Motor neuron (in vitro differentiated cells): ENCODE measurements at regions of chr19 and their contacts with region 1.

Region 1: GRCh38 chr19:44723952-44724319 is 24.6 kb upstream of the BCL3 start:
- ATAC-seq: peak; percentile 84 to 99 (median 95)
- H3K4me3 ChIP-seq: no peak overlapping the region
- H3K27ac ChIP-seq: no peak overlapping the region
- H3K4me1 ChIP-seq: peaks cover 0 to 1% of the 10 kb centered on the region in 2 donors

Region 2: DNA sequence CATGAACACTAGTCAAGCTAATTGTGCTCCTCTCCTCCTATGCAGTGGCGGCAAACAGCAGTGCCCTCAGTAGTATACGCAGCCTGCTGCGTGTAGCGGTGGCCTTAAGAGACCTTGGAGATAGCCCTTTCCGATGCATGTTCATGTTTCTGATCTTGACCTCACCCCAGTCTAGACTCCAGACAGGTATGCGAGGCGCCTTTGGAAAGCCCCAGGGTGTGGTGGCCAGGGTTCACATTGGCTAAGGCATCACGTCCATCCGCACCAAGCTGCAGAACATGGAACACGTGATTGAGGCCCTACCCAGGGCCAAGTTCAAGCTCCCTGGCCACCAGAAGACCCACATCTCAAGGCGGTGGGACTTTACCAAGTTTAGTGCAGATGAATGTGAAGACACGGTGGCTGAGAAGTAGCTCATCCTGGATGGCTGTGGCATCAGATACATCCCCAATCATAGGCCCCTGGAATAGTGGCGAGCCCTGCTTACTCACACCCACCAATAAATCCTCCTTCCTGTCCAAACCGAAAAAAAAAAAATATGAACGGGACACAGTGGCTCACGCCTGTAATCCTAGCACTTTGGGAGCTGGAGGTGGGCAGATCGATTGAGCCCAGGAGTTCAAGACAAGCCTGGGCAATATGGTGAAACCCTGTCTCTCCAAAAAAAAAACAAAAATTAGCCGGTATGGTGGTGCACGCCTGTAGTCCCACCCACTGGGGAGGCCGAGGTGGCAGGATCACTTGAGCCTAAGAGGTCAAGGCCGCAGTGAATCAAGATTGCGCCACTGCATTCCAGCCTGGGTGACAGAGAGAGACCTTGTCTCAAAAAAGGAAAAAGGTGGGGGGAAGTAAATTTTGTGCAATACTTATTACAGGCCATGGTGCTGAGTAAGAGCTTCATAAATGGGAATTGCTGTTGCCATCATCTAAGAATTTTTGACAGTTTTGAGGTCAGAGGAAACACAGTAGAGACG is 41.3 kb after region 1 on chr19:
- in situ Hi-C with region 1: loop called in 1 of 9 experiments (anchors 5 kb)
- ATAC-seq: peak in 5 of 8 experiments; percentile 1 to 27 (median 2)
- H3K4me3 ChIP-seq: no peak overlapping the region
- H3K27ac ChIP-seq: no peak overlapping the region
- H3K4me1 ChIP-seq: no peaks in the 10 kb centered on the region

Region 3: GRCh38 chr19:44777715-44778347 is 53.9 kb after region 1 on chr19 and contains the start of gene CBLC:
- in situ Hi-C with region 1: no loop called
- ATAC-seq: peak in 6 of 8 experiments; percentile 65 to 91 (median 82)
- H3K4me3 ChIP-seq: no peak within 1 kb of the TSS
- H3K27ac ChIP-seq: no peak within 1 kb of the TSS
- H3K4me1 ChIP-seq: no peaks in the 10 kb centered on the region
- total RNA-seq, gene CBLC: not detected

Region 4: DNA sequence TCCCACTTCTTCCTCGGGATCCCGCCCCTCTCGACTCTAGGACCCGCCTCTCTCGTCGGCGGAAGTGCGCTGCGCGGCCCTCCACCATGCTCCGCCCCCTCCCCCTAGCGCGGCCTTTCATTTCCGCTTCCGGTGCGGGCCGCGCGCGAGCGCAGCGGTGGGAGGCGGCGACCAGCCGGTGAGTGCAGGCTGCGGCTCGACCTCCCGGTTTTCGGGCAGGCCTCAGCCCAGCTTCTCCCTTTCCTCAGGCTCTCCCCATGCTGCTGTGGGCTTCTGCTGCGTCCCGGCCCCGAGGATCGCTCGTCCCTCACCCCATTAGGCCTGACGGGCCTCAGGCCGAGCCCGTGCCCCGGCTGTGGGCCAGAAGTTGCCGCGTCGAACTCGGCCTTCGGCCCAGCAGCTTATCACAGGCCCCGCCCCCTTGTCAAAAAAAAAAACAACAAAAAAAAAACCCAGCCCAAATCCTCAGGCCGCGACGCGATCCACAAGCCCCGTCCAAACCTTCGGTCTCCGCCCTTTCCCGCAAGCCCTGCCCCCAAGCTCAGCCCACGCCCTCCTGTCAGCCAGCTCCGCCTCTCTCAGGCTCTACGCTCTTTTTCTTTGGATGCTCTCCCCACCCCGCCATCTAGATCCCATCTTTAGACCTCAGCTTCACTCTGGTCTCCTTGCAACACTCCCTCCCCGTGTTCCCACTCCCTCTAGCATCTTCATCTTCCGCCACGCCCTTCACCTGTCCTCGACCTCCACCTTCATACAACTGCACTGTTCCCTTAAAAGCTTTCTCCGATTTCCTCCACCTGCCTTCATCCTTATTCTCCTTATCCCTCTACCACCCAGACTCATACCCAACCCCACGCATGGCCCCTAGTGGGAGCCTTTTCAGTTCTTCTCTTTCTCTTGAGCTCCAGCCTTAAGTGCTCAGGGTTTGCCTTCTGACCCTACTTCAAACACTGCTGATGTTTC is 315.3 kb after region 1 on chr19 and contains the start of gene CLASRP:
- in situ Hi-C with region 1: no loop called
- ATAC-seq: peak; percentile 93 to 98 (median 96)
- H3K4me3 ChIP-seq: peak within 1 kb of the TSS; percentile 74 to 96 (median 81)
- H3K27ac ChIP-seq: peak within 1 kb of the TSS; percentile 86 to 92
- H3K4me1 ChIP-seq: peaks cover 7 to 11% of the 10 kb centered on the region in 2 donors
- total RNA-seq, gene CLASRP: 22.2 to 82.6 (median 34.6) TPM